ENCODE measurements at regions of chrX and their contacts with region 1.

Region 1: DNA sequence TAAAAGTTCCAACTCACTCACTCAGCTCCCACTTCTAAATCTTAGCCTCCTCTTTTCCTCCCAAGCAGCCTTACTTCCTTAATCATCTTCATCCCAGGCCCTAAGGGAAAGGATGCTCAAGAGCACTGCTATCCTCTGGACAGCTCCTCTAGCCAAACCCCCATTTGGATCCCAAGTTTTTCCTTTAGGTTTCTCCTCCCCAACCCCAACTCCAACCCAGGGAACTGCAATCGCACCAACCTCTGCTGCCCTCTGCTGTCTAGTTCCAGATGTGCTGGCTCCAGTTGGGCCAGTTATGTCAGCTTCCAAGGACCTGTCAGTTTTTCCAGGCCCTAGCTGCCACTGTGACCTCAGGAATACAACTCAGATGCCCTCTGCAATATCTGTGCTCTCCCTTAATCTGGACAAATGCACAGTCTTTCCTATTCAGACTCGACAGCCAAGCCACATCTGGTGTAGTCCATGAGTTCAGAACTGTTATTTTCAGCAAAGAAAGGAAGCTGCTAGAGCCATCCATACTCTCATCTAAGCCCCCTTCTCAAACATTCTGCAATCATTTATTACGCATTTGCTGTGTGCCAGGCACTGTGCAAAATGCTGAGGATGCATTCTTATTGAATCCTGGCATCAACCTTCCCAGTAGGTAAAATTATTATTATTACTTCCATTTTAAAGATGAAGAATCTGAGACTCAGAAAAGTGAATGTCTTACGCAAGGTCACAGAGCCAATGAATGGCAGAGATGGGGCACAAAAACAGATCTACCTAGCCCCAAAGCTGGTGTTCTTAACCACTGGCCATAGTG is 12.3 kb upstream of the XPNPEP2 start:
- DNase-seq: no peak
- ATAC-seq: peak; percentile 83
- H3K4me3 ChIP-seq: no peak overlapping the region
- H3K27ac ChIP-seq: no peak overlapping the region
- H3K4me1 ChIP-seq: no peaks in the 10 kb centered on the region
- H3K27me3 ChIP-seq: no peaks in the 10 kb centered on the region
- CTCF ChIP-seq: peak; percentile 54 to 74 (median 67)
- EP300 ChIP-seq: no peak
- POLR2A ChIP-seq: no peak
- RAD21 ChIP-seq: peak; percentile 68

Region 2: DNA sequence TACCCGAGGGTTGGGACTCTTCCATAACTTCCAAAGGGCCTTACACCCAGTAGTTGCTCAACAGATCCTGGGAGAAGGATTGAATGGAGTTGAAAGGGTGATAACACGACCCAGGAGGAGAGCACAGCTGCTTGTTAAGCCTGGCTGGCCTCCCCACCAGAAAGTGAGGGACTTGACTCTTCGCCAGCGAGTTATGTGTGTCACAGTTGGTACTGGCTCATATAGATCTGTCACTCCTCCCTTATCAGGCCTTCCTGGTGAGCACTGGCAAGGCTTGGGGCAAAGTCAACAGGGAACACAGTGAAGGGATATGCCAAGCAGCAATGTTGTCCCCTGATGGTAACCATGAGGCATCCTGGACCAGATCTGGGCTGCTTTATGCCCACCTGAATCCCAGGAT is 107.5 kb before region 1 on chrX:
- CTCF ChIA-PET with region 1: no interaction called
- POLR2A ChIA-PET with region 1: no interaction called
- RAD21 ChIA-PET with region 1: no interaction called
- SMC1A ChIA-PET with region 1: no interaction called
- in situ Hi-C with region 1: no loop called
- intact Hi-C with region 1: no loop called
- DNase-seq: no peak
- ATAC-seq: no peak
- H3K4me3 ChIP-seq: no peak overlapping the region
- H3K27ac ChIP-seq: no peak overlapping the region
- H3K4me1 ChIP-seq: no peaks in the 10 kb centered on the region
- H3K27me3 ChIP-seq: no peaks in the 10 kb centered on the region; a peak in 1 of 4 replicates
- CTCF ChIP-seq: no peak
- EP300 ChIP-seq: no peak
- POLR2A ChIP-seq: no peak
- RAD21 ChIP-seq: no peak

Region 3: GRCh38 chrX:129637217-129638109 is 89.0 kb before region 1 on chrX:
- CTCF ChIA-PET with region 1: interaction called, 74 read pairs
- POLR2A ChIA-PET with region 1: no interaction called
- RAD21 ChIA-PET with region 1: interaction called, 18 read pairs
- SMC1A ChIA-PET with region 1: interaction called, 28 read pairs
- in situ Hi-C with region 1: no loop called
- intact Hi-C with region 1: loop called (anchors 1 kb)
- DNase-seq: peak; percentile 33
- ATAC-seq: peak; percentile 92
- H3K4me3 ChIP-seq: no peak overlapping the region
- H3K27ac ChIP-seq: no peak overlapping the region
- H3K4me1 ChIP-seq: no peaks in the 10 kb centered on the region
- H3K27me3 ChIP-seq: no peaks in the 10 kb centered on the region; a peak in 2 of 4 replicates
- CTCF ChIP-seq: peak; percentile 93 to 98 (median 97)
- EP300 ChIP-seq: no peak
- POLR2A ChIP-seq: no peak
- RAD21 ChIP-seq: peak; percentile 79

Region 4: DNA sequence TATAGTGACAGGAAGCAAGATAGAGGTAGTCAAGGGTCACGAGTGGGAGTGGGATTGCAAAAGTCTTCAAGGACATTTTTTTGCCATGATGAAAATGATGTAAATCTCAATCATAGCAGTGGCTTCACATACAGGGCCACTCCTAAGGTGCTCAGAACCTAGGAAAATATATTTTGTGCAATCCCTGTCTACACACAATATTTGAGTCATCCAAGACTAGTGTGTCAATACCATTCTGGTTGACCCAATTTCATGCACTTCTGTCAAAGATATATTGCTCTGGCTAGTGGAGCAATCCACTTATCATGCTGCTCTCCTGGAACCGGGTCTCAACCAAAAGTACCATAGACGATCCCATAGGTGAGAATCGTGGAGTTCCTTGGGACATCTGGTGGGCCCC is 11.9 kb before region 1 on chrX:
- CTCF ChIA-PET with region 1: interaction called, 10 read pairs
- POLR2A ChIA-PET with region 1: no interaction called
- RAD21 ChIA-PET with region 1: no interaction called
- SMC1A ChIA-PET with region 1: interaction called, 3 read pairs
- in situ Hi-C with region 1: no loop called
- intact Hi-C with region 1: no loop called
- DNase-seq: no peak
- ATAC-seq: no peak
- H3K4me3 ChIP-seq: no peak overlapping the region
- H3K27ac ChIP-seq: no peak overlapping the region
- H3K4me1 ChIP-seq: no peaks in the 10 kb centered on the region
- H3K27me3 ChIP-seq: no peaks in the 10 kb centered on the region; a peak in 1 of 4 replicates
- CTCF ChIP-seq: no peak
- EP300 ChIP-seq: no peak
- POLR2A ChIP-seq: no peak
- RAD21 ChIP-seq: no peak

Region 5: DNA sequence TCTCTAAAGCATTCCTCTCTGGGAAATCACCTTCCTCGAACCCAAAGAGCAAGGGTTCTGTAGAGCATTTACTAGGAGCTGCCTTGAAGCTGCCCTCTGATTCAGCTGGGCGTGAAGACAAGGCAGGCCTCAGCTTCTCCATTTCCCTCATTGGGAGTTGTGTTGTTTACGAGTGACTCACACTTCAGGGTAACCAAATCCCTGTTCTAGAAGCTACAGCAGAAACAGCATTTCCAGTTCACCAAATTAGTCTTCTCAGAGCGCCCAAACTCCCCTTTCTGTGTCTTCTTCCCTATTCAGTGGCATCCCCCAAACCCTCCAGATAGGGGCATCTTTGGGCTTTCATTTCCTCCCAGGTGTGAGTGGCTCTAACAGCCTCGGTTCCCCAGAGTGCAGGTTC is 11.4 kb after region 1 on chrX:
- CTCF ChIA-PET with region 1: interaction called, 10 read pairs
- POLR2A ChIA-PET with region 1: no interaction called
- RAD21 ChIA-PET with region 1: no interaction called
- SMC1A ChIA-PET with region 1: interaction called, 4 read pairs
- in situ Hi-C with region 1: no loop called
- intact Hi-C with region 1: no loop called
- DNase-seq: no peak
- ATAC-seq: peak; percentile 67
- H3K4me3 ChIP-seq: no peak overlapping the region
- H3K27ac ChIP-seq: no peak overlapping the region
- H3K4me1 ChIP-seq: no peaks in the 10 kb centered on the region
- H3K27me3 ChIP-seq: no peaks in the 10 kb centered on the region; a peak in 1 of 4 replicates
- CTCF ChIP-seq: peak in 1 of 3 experiments; percentile 15; a peak in 1 of 6 replicates
- EP300 ChIP-seq: no peak
- POLR2A ChIP-seq: no peak
- RAD21 ChIP-seq: peak; percentile 31; the same call in 1 of the 2 replicates